ENCODE measurements at regions of chr1 and their contacts with region 1.

Region 1: GRCh38 chr1:101309334-101310311 is 72.8 kb downstream of the S1PR1 start:
- DNase-seq: peak; percentile 53 to 94 (median 74)
- ATAC-seq: peak; percentile 76
- H3K4me3 ChIP-seq: peak overlapping the region; percentile 52
- H3K4me3 Mint-ChIP-seq: peak overlapping the region; percentile 76
- H3K27ac ChIP-seq: peak overlapping the region; percentile 82 to 88
- H3K27ac Mint-ChIP-seq: peak overlapping the region; percentile 96
- H3K4me1 ChIP-seq: peaks cover 56% of the 10 kb centered on the region
- H3K4me1 Mint-ChIP-seq: peaks cover 66% of the 10 kb centered on the region
- H3K27me3 ChIP-seq: no peaks in the 10 kb centered on the region
- H3K27me3 Mint-ChIP-seq: no peaks in the 10 kb centered on the region
- CTCF ChIP-seq: peak; percentile 89

Region 2: GRCh38 chr1:100895540-100896483 is 413.8 kb before region 1 on chr1 and contains the start of gene SLC30A7:
- CTCF ChIA-PET with region 1: interaction called, 3 read pairs
- POLR2A ChIA-PET with region 1: interaction called, 12 read pairs
- intact Hi-C with region 1: no loop called
- DNase-seq: peak; percentile 91 to 98 (median 97)
- ATAC-seq: peak; percentile 71
- H3K4me3 ChIP-seq: peak within 1 kb of the TSS; percentile 93
- H3K4me3 Mint-ChIP-seq: peak within 1 kb of the TSS; percentile 98
- H3K27ac ChIP-seq: peak within 1 kb of the TSS; percentile 98 to 100
- H3K27ac Mint-ChIP-seq: peak within 1 kb of the TSS; percentile 99
- H3K4me1 ChIP-seq: peaks cover 10% of the 10 kb centered on the region
- H3K4me1 Mint-ChIP-seq: peaks cover 69% of the 10 kb centered on the region
- H3K27me3 ChIP-seq: no peaks in the 10 kb centered on the region
- H3K27me3 Mint-ChIP-seq: no peaks in the 10 kb centered on the region
- CTCF ChIP-seq: no peak
- total RNA-seq, gene SLC30A7: 21.6 to 21.7 TPM

Region 3: DNA sequence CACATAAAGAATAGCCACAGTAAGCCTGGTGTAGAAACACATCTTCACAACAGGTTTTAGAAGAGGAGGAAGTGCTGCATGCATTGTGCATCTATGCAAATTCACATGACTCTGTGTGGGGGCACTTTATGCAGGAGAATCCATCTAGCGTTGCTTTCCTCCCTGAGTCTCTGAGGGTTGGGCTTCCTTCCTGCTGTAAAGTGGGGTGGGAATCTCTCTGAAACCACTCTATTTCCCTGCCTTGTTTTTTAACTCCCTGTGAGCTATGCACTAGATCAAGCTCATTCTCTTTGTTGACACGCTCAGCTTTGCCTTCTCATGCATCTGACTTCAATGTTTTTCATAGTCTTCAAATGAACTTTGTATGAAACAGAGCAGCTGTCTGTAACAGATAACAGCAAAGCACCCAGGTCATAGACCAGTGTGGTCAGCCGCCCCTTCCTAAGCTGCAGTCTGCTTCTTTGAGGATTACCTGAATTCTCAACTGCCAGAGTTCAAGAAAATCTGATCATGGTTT is 181.4 kb before region 1 on chr1:
- CTCF ChIA-PET with region 1: interaction called, 4 read pairs
- POLR2A ChIA-PET with region 1: interaction called, 5 read pairs
- intact Hi-C with region 1: loop called in 1 of 2 experiments (anchors 1 kb)
- DNase-seq: peak in 13 of 14 experiments; percentile 5 to 64 (median 37)
- ATAC-seq: peak; percentile 71
- H3K4me3 ChIP-seq: no peak overlapping the region
- H3K4me3 Mint-ChIP-seq: peak overlapping the region; percentile 75
- H3K27ac ChIP-seq: peak overlapping the region; percentile 33 to 66
- H3K27ac Mint-ChIP-seq: peak overlapping the region; percentile 83
- H3K4me1 ChIP-seq: peaks cover 33% of the 10 kb centered on the region
- H3K4me1 Mint-ChIP-seq: peaks cover 73% of the 10 kb centered on the region
- H3K27me3 ChIP-seq: no peaks in the 10 kb centered on the region
- H3K27me3 Mint-ChIP-seq: no peaks in the 10 kb centered on the region
- CTCF ChIP-seq: no peak

Region 4: GRCh38 chr1:101288491-101288944 is 21.1 kb before region 1 on chr1:
- CTCF ChIA-PET with region 1: interaction called, 32 read pairs
- POLR2A ChIA-PET with region 1: interaction called, 30 read pairs
- intact Hi-C with region 1: no loop called
- DNase-seq: peak; percentile 45 to 90 (median 64)
- ATAC-seq: peak; percentile 62
- H3K4me3 ChIP-seq: no peak overlapping the region
- H3K4me3 Mint-ChIP-seq: peak overlapping the region; percentile 25
- H3K27ac ChIP-seq: no peak overlapping the region
- H3K27ac Mint-ChIP-seq: peak overlapping the region; percentile 83
- H3K4me1 ChIP-seq: peaks cover 78% of the 10 kb centered on the region
- H3K4me1 Mint-ChIP-seq: peaks cover 76% of the 10 kb centered on the region
- H3K27me3 ChIP-seq: no peaks in the 10 kb centered on the region
- H3K27me3 Mint-ChIP-seq: no peaks in the 10 kb centered on the region
- CTCF ChIP-seq: peak; percentile 89

Region 5: DNA sequence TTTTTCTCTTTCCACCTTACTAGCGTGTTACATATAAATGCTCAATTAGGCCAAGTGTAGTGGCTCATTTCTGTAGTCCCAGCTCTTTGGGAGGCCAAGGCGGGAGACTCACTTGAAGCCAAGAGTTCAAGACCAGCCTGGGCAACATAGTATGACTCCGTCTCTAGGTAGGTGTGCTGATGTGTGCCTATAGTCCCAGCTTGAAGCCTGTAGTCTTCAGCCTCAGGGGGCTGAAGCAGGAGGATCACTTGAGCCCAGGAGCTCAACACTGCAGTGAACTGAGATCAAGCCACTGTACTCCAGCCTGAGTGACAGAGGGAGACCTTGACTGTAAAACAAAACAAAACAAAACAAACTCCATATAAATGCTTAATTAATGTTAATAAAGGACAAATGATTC is 39.7 kb after region 1 on chr1:
- CTCF ChIA-PET with region 1: interaction called, 20 read pairs
- POLR2A ChIA-PET with region 1: interaction called, 18 read pairs
- intact Hi-C with region 1: no loop called
- DNase-seq: no peak
- ATAC-seq: no peak
- H3K4me3 ChIP-seq: no peak overlapping the region
- H3K4me3 Mint-ChIP-seq: no peak overlapping the region
- H3K27ac ChIP-seq: no peak overlapping the region
- H3K27ac Mint-ChIP-seq: no peak overlapping the region
- H3K4me1 ChIP-seq: no peaks in the 10 kb centered on the region
- H3K4me1 Mint-ChIP-seq: peaks cover 38% of the 10 kb centered on the region
- H3K27me3 ChIP-seq: no peaks in the 10 kb centered on the region
- H3K27me3 Mint-ChIP-seq: no peaks in the 10 kb centered on the region
- CTCF ChIP-seq: no peak

Region 6: DNA sequence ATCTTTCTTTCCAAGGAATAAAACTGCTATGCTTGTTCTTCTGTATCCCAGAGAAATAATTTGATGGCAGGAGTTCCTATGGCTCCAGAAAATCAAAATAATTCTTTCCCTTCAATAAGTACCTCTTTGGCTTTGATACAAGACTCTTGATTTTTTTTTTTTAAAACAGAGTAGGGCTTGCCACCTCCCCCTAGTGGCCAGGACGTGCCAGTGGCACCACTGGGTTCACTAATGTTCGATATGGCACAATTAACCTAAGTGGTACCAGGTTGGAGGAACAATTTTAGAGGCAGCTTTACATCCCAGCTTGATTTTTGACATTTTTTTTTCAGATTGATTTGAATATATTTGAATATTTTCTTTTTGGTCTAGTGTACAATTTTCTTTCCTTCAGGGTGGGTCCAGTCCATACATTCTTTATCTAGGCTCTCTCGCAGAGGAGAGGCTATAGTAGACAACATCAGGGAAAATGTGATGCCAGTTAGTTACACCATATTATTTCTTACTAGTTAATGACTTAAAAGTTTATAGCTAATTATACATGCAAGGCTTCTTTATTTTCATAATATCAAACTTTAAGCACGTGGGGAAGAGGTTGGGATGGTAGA is 258.1 kb after region 1 on chr1:
- CTCF ChIA-PET with region 1: interaction called, 3 read pairs
- POLR2A ChIA-PET with region 1: no interaction called
- intact Hi-C with region 1: loop called (anchors 1 to 5 kb)
- DNase-seq: peak; percentile 9 to 63 (median 34)
- ATAC-seq: peak; percentile 84
- H3K4me3 ChIP-seq: no peak overlapping the region
- H3K4me3 Mint-ChIP-seq: no peak overlapping the region
- H3K27ac ChIP-seq: no peak overlapping the region
- H3K27ac Mint-ChIP-seq: no peak overlapping the region
- H3K4me1 ChIP-seq: no peaks in the 10 kb centered on the region
- H3K4me1 Mint-ChIP-seq: no peaks in the 10 kb centered on the region
- H3K27me3 ChIP-seq: no peaks in the 10 kb centered on the region
- H3K27me3 Mint-ChIP-seq: peaks cover 20% of the 10 kb centered on the region
- CTCF ChIP-seq: peak; percentile 99

Measured in CD4-positive, alpha-beta T cell (primary cell).